ACHN (cell line): ENCODE measurements at regions of chr11 and their contacts with region 1.

Region 1: DNA sequence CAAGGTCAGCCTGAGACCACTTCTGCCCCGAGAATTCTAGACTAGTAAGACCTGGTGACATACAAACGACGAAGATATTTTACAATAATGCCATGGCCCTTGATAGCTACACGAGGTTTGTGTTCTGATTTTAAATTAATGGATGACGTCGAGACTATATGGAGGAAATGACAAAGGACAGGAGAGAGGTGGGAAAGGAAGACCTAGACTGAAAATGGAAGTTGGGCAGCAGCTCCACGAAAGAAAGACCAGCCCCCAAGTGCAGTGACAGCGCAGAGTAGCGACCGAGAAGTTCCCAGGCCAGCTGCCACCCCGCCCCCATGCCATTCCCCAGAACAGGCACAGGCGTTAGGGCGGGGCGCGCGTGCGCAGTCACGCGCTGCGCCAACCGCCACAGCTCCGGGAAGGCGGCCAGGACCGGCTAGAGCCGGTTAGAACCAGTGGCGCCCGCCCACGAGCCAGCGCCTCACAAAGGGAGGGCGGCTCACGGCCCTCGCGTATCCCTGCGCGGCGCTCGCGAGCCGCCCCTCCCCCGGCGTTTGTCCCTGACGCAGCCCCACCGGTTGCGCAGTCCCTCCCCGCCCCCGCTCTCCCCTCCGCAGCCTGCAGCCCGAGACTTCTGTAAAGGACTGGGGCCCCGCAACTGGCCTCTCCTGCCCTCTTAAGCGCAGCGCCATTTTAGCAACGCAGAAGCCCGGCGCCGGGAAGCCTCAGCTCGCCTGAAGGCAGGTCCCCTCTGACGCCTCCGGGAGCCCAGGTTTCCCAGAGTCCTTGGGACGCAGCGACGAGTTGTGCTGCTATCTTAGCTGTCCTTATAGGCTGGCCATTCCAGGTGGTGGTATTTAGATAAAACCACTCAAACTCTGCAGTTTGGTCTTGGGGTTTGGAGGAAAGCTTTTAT is 1.5 kb upstream of the MALAT1 start:
- DNase-seq: peak; percentile 96

Region 2: DNA sequence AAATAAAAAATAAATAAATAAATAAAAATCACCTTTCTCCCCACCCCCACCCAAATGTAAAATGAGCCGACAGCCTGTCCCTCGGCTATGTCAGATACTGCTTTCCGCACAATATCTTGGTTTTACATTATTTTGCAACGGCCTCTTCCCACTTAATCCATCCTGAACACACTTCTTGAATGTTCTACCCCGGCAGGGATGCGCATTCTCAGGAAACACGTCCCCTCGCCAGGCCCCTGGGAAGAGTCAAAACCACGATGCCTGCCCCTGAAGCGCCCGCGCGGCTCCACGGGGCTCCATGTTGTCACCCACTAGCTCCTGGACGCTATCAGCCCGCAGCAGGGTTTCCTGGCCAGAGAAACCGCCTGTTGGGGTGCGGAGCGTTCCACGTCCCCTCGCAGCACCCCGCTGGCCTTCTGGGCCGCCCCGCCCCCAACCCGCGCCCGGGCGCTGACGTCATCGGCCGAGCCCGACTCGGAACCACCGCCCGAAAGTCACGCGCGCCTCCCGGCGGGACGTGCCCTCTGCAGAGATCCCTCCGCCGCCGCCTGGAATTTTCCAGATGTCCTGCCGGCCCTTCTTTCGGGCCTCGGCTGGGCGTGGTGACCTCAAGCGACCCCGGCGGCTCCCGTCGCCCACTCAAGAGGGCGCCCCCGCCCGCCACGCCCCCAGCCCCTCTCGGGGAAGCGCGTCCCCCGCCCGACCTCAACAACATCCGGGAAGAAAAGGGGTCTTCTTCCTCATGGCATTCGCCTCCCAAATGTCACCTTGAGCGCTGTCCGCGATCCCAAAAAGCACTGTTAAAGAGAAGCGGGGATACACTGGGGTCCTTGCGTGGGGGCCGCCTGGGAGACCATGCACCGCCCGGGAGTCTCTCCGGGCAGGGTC is 75.3 kb before region 1 on chr11:
- in situ Hi-C with region 1: loop called (anchors 10 kb)
- DNase-seq: peak; percentile 95